Mammary epithelial cell (primary cell): ENCODE measurements at regions of chr10 and their contacts with region 1.

Region 1: GRCh38 chr10:110395725-110396651 is 91.3 kb upstream of the SMNDC1 start:
- DNase-seq: peak; percentile 97
- H3K4me3 ChIP-seq: no peak overlapping the region
- H3K27ac ChIP-seq: peak overlapping the region; percentile 66
- H3K4me1 ChIP-seq: peaks cover 50% of the 10 kb centered on the region
- H3K27me3 ChIP-seq: no peaks in the 10 kb centered on the region
- CTCF ChIP-seq: no peak

Region 2: GRCh38 chr10:110354322-110354766 is 41.6 kb before region 1 on chr10:
- CTCF ChIA-PET with region 1: interaction called, 4 read pairs
- dilution Hi-C with region 1: no loop called
- in situ Hi-C with region 1: loop called in 1 of 2 experiments (anchors 5 kb)
- intact Hi-C with region 1: loop called (anchors 1 kb)
- DNase-seq: peak; percentile 87
- H3K4me3 ChIP-seq: peak overlapping the region; percentile 25 to 33 (median 32)
- H3K27ac ChIP-seq: peak overlapping the region; percentile 99
- H3K4me1 ChIP-seq: peaks cover 59% of the 10 kb centered on the region
- H3K27me3 ChIP-seq: no peaks in the 10 kb centered on the region
- CTCF ChIP-seq: peak; percentile 83 to 86

Region 3: GRCh38 chr10:110368002-110368401 is 28.0 kb before region 1 on chr10:
- CTCF ChIA-PET with region 1: no interaction called
- dilution Hi-C with region 1: no loop called
- in situ Hi-C with region 1: no loop called
- intact Hi-C with region 1: loop called (anchors 1 kb)
- DNase-seq: no peak
- H3K4me3 ChIP-seq: no peak overlapping the region
- H3K27ac ChIP-seq: no peak overlapping the region
- H3K4me1 ChIP-seq: peaks cover 38% of the 10 kb centered on the region
- H3K27me3 ChIP-seq: no peaks in the 10 kb centered on the region
- CTCF ChIP-seq: no peak

Region 4: DNA sequence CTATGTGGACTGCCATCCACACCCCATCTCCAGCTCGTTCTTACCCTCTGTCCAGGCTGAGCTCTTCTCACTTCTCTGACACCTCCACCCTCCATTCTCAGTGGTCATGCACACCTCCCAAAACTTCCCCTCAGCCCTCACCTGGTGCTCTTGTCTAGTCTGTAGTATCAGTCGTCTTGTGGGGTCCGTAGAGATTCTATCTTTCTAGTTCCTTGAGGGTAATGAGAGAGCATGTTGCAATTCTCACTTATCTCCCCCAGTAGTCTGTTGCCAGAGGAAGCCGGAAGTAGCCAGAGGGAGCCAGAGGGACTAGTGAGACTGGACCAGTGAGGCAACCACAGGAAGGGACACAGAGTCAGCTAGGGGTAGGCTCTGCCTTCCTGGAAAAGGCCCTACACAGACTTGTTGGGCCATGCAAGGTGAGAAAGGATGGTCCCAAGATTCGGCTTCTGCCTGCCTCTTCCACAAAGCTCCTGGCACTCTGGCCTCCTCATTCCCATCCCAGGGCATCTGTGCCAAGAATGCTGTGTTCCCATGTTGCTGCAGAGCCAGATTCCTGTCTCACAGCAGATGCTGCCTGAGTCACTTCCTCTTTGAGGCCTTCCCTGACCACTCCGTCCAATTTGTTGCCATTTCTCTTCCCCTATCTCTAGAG is 51.1 kb after region 1 on chr10:
- CTCF ChIA-PET with region 1: no interaction called
- dilution Hi-C with region 1: no loop called
- in situ Hi-C with region 1: no loop called
- intact Hi-C with region 1: loop called (anchors 1 kb)
- DNase-seq: peak; percentile 81
- H3K4me3 ChIP-seq: no peak overlapping the region
- H3K27ac ChIP-seq: peak overlapping the region; percentile 57
- H3K4me1 ChIP-seq: peaks cover 19% of the 10 kb centered on the region
- H3K27me3 ChIP-seq: no peaks in the 10 kb centered on the region
- CTCF ChIP-seq: no peak

Region 5: DNA sequence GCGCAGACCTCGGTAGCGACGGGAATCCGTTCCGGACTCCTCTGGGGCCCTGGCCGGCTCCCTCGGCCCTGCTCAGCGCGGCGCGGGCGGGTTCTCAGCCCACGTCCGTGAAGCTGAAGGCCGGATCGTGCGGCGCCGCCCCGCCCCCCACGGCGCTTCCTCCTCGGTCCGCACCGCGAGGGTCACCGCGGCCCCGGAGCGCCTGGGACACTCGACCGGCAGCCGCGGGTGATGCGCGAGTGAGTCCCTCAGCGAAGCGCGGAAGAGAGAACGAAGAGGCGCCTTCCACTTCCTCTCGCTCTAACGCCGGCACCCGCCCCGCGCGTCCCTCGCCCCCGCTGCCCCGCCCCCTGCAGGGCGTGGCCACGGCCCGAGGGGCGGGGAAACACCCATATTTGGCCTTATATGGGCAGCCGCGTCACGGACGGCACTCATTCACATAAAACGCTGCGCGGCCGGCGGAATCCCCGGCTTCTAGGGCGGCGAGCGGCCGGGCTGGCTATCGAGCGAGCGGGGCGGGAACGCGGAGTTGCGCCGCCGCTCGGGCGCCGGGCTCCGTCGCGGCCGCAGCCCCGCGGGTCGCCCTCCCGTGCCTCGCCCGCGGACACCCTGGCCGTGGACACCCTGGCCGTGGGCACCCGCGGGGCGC is 101.6 kb after region 1 on chr10 and contains the start of gene DUSP5:
- CTCF ChIA-PET with region 1: no interaction called
- dilution Hi-C with region 1: no loop called
- in situ Hi-C with region 1: no loop called
- intact Hi-C with region 1: loop called (anchors 1 kb)
- DNase-seq: peak; percentile 96
- H3K4me3 ChIP-seq: peak within 1 kb of the TSS; percentile 80 to 90 (median 82)
- H3K27ac ChIP-seq: peak within 1 kb of the TSS; percentile 92
- H3K4me1 ChIP-seq: peaks cover 49% of the 10 kb centered on the region
- H3K27me3 ChIP-seq: no peaks in the 10 kb centered on the region
- CTCF ChIP-seq: no peak
- total RNA-seq, gene DUSP5: 18.0 to 107 TPM

Region 6: DNA sequence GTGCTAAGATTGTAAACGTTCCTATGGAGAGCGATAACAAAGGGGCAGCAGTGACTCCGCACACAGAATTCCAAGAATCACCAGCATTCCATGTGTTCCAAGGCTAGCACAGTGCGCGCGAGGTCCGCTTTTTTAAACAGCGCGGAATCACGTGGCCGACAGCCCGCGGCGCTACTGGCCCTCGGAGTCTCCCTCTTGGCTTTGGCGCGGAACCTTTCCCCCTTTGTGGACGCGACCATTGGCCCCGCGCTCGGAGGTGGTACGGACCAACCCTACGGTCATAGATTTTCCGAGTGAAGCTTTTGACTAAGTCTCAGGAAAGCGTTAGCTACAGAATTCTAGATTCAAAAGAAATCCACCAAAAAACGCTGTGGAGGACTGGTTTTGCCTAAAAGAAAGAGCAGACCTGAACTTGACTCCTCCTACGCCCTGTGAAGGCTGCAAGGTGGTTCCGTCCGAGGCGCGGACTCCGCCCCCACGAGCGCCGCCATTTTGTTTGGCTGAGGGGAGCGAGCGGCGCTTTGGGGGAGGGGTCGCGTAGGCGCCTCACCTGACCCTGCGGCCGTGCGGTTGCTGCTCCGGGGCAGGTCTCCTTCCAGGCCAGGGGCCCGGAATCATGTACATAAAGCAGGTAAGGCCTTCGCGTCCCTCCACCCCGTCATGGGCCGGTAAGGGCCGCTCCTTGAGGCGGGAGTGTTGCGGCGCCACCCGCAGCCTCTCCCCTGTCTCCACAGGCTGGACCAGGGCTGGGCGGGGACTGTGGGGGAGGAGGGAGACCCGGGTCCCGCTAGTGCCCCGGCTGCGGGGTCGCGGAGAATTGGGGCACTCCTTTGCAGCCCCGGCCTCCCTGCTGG is 171.4 kb after region 1 on chr10 and contains the start of gene SMC3:
- CTCF ChIA-PET with region 1: no interaction called
- dilution Hi-C with region 1: no loop called
- in situ Hi-C with region 1: no loop called
- intact Hi-C with region 1: no loop called
- DNase-seq: peak; percentile 91
- H3K4me3 ChIP-seq: peak within 1 kb of the TSS; percentile 63 to 88 (median 88)
- H3K27ac ChIP-seq: peak within 1 kb of the TSS; percentile 98
- H3K4me1 ChIP-seq: no peaks in the 10 kb centered on the region
- H3K27me3 ChIP-seq: no peaks in the 10 kb centered on the region
- CTCF ChIP-seq: no peak
- total RNA-seq, gene SMC3: 10.2 to 34.3 TPM